ENCODE measurements at regions of chr2 and their contacts with region 1.

Region 1: DNA sequence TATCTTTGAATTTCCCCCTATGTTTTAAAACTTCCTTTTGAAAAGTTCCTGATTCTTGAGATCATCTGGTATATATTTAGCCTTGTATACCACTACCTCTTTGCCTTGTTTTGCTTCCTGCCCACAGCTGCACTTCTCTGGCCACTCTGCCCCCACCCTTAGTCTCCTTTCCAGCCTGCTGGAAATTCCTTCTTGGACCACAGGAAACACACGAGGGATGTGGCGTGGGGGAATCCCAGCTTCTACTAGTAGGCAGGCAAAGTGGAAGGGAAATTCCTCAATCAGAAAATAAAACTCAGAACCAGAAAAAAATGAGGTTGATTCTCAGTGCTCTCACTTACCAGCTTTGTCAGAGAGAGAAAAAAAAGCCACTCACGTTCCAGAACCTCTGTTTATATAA is 13.4 kb downstream of the IL18RAP start:
- DNase-seq: no peak
- ATAC-seq: peak; percentile 19
- H3K4me3 Mint-ChIP-seq: no peak overlapping the region
- H3K27ac Mint-ChIP-seq: peak overlapping the region; percentile 47
- H3K4me1 Mint-ChIP-seq: peaks cover 45% of the 10 kb centered on the region
- H3K27me3 Mint-ChIP-seq: no peaks in the 10 kb centered on the region

Region 2: DNA sequence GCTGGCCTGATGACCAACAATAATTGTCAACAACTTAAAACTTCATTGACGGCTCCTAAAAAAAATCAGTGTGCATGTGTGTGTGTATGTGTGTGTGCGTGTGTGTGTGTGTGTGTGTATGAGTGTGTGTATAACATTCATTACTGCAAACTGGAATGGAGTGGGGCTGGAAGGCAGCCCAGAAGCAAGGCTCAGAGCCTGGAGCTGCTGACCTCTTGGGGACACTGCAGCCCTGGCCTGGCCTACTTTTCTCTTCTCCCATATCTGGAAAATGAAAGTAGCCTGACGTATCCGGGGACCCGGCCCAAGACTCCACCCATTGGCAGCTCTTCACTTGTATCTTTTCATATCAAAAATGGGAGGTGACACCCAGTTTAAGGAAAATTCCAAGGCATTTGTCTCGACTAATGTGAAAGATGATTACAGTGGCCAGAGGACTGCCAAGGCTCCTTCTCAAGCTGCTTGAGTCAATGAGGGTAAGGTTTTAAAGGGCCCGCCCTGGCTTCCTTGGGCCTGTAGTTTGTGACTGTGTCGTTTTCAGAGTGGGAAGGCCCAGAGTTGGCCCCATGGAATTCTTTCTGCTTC is 366.2 kb before region 1 on chr2:
- CTCF ChIA-PET with region 1: no interaction called
- POLR2A ChIA-PET with region 1: no interaction called
- DNase-seq: no peak
- ATAC-seq: no peak
- H3K4me3 Mint-ChIP-seq: no peak overlapping the region
- H3K27ac Mint-ChIP-seq: no peak overlapping the region
- H3K4me1 Mint-ChIP-seq: peaks cover 7% of the 10 kb centered on the region
- H3K27me3 Mint-ChIP-seq: peaks cover 2% of the 10 kb centered on the region

Region 3: GRCh38 chr2:102424754-102425153 is 11.6 kb before region 1 on chr2:
- CTCF ChIA-PET with region 1: interaction called, 38 read pairs
- POLR2A ChIA-PET with region 1: no interaction called
- DNase-seq: no peak
- ATAC-seq: no peak
- H3K4me3 Mint-ChIP-seq: no peak overlapping the region
- H3K27ac Mint-ChIP-seq: peak overlapping the region; percentile 46
- H3K4me1 Mint-ChIP-seq: peaks cover 81% of the 10 kb centered on the region
- H3K27me3 Mint-ChIP-seq: no peaks in the 10 kb centered on the region

Region 4: GRCh38 chr2:102451963-102452362 is 15.6 kb after region 1 on chr2:
- CTCF ChIA-PET with region 1: no interaction called
- POLR2A ChIA-PET with region 1: no interaction called
- DNase-seq: no peak
- ATAC-seq: no peak
- H3K4me3 Mint-ChIP-seq: no peak overlapping the region
- H3K27ac Mint-ChIP-seq: no peak overlapping the region
- H3K4me1 Mint-ChIP-seq: peaks cover 33% of the 10 kb centered on the region
- H3K27me3 Mint-ChIP-seq: no peaks in the 10 kb centered on the region

Measured in activated CD8-positive, alpha-beta T cell treated with anti-CD3 and anti-CD28 coated beads, Interleukin-2, amount 10 ng/mL, durations not matched to agents 7 days and 5 days (primary cell).